ENCODE measurements at regions of chr1 and their contacts with region 1.

Region 1: GRCh38 chr1:31065310-31066217 is at the start of gene PUM1:
- DNase-seq: peak; percentile 98
- total RNA-seq, gene PUM1: 83.7 TPM

Region 2: GRCh38 chr1:30966690-30967369 is 98.7 kb before region 1 on chr1:
- intact Hi-C with region 1: loop called (anchors 5 kb)
- DNase-seq: no peak

Region 3: DNA sequence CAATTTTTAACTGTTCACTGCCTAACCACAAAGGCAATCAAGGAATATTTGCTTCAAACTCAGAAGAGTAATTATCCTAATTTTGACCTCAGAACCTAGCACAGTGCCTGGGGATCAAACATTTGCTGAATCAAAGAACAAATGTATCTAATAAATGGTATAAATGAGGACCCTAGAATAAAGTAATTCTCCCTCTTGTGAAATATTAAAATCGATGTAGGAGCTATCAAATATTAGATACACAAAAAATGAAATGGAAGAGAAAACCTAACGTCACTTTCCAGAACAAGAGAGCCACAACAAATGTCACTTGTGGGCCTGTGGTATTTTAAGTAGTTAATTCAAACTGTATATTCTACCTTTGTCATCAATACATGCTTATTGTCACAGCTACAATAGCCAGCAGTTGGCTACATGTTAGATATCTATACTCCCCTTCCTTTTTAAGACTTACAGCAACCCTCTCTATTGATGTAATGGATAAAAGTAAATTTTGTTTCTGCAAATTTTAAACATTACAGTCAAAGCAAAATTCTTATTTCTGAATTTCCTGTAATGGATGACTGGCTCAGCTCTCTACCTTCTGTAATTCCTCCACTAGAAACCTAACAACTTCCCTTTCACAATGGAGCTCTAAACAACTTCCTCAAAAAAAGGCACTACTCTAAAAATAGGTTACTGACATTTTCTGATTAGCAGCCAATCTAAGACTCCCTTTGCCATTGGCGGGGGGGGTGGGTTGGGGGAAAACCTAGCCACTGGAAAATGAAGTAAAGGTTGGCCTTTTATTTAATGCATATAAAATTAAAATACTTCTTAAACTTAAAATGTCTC is 37.7 kb before region 1 on chr1:
- intact Hi-C with region 1: loop called (anchors 2 kb)
- DNase-seq: no peak

Region 4: DNA sequence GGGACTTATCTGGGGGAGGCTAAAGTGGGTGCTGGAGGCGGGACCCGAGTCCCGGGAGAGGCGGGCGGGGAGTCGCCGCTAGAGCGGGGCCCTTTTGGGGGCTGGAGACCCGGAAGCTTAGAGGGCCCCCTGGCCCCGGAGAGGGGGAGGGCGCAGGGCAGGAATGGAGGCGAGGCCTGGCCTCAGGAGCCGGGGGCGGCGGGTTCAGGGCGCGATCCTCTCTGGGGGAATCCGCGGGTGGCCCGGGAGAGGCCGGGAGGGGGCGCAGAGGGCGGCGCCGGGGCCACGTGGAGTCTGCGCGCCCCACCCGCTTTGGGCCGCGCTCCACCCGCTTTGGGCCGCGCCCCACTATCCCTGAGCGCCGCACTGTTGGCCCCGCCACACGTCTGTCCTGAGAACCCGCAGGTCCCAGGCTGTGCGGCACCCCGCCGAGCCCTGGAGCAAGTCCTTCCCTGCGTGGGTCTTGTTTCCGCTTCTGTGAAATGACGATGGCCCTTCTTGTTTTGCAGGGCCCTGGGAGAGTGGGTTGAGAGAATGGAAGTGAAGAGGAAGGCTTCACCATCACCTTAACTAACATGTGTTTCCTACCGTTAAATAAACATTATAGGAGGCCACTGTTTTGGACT is 89.8 kb after region 1 on chr1:
- intact Hi-C with region 1: loop called (anchors 2 kb)
- DNase-seq: peak; percentile 75

Region 5: DNA sequence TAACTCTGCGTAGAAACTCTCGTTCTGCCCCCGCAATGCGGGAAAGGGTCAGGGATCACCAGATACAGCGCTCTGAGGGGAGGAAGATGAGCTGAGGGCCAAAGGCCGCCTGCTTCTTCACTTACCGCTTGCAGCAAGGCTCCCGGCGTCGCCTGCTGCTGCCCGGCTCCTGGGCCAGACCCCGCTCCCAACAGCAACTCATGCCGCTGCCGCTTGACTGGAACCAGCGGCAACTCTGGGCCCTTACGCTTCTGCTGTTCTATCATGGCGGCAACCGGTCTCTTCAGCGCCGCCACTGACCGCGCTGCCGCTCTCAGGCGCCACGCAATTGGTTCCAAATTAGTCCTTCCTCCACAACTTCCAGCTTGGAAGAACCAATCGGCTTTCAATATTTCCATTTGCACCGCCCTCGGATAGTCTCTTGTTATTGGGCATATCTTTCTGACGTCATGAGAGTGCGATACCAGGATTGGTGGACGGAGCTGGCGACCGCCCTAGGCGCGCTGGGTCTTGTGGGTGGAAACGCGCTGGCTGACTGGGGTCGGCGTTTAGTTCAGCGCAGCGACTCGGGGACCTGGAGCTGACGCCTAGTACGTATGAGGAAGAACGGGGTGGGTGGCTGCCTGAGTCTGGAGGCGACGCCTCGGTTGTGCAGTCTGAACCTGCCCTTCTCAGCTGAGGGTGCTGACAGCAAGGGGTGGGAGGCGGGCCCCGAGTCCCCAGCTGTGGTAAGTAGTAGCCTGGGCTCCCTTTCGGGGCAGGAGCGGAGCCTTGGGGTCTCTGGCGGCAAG is 231.1 kb after region 1 on chr1 and contains the starts of genes SNRNP40 and ZCCHC17:
- intact Hi-C with region 1: loop called (anchors 10 kb)
- DNase-seq: peak; percentile 96
- total RNA-seq, gene SNRNP40: 21.6 TPM
- total RNA-seq, gene ZCCHC17: 12.4 TPM